ENCODE measurements at regions of chr1 and their contacts with region 1.

Region 1: DNA sequence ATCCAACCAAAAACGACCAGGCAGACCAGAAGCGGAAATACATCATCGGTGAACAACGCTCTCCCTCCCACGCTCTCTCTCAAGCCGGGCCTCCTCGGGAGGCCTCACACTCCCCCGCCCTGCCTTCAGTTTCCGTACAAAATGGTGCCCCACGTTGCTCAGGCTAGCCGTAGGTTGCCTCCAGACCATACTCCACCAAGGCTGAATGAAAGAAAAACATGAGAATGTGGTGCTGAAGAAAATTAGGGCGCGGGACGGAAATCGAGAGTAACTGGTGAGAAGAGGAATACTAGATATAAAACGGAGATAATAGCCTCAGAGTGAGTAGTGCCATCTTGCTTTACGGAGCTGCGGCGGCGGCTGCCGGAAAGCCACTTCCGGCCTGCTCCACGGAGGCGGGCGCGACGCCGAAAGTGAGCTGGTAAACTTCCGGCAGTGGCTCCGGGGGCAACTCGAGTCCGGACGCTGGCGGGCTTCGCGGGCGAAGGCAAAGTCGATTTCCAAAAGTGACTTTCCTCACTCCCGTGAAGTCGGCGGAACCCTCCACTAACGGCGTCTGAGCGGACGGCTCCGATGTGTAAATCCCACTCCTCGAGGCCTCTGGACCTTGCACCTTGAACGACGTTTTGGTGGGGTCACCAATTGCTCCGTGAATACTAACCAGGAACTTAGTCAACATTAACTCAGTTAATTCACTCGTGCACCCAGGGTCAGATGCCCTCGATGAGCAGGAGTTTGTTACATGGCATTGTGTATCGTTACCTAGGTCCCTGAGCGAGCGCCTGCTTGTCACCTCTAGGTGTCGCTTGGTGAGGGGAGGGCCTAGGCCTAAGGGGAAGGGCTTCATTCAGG is at the start of gene SH3BP5L:
- DNase-seq: peak; percentile 77 to 97 (median 90)
- ATAC-seq: peak; percentile 85
- H3K4me3 ChIP-seq: peak within 1 kb of the TSS; percentile 72 to 88
- H3K4me3 Mint-ChIP-seq: peak within 1 kb of the TSS; percentile 95
- H3K27ac ChIP-seq: peak within 1 kb of the TSS; percentile 92 to 99
- H3K27ac Mint-ChIP-seq: peak within 1 kb of the TSS; percentile 97
- H3K4me1 ChIP-seq: peaks cover 45% of the 10 kb centered on the region
- H3K4me1 Mint-ChIP-seq: peaks cover 57% of the 10 kb centered on the region
- H3K27me3 ChIP-seq: no peaks in the 10 kb centered on the region
- H3K27me3 Mint-ChIP-seq: no peaks in the 10 kb centered on the region
- CTCF ChIP-seq: peak; percentile 67
- total RNA-seq, gene SH3BP5L: 19.0 to 20.4 TPM

Region 2: DNA sequence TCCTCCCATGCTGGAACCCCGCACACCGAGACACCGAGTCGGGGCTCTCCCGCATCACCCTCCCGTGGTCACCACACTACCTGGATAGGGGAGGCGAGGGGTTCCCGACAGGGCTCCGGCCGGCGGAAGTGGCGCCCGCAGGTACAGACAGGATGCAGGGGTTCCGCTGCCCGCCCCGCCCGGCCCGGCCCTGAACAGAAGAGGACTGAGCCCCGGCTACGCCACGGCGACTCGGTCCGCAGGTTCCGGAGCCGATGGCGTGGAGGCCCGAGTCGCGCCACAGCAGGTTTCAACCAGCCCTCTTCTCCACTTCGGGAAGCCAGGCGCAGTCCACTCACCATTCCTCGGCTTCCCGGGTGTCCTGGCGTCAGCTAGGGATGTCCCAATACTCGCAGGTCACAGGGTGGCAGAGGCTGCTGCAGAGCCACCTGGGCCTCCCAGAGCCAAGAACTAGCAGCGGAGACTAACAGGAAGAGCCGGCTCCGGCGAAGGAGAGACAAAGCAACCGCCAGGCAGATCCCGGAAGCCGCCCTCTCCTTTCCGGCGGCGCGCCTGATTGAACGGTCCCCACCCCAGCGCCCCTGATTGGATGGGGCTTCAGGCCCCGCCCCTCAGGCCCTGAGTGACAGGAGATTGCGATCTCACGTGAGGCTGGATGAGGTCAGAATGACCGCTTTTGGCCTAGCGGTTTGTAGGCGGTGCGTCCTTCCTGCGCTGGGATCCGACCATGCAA is 1722.1 kb before region 1 on chr1 and contains the start of gene ZNF669:
- CTCF ChIA-PET with region 1: no interaction called
- POLR2A ChIA-PET with region 1: no interaction called
- intact Hi-C with region 1: loop called in 1 of 2 experiments (anchors 5 kb)
- DNase-seq: peak; percentile 83 to 94 (median 91)
- ATAC-seq: peak; percentile 98
- H3K4me3 ChIP-seq: peak within 1 kb of the TSS; percentile 74 to 96
- H3K4me3 Mint-ChIP-seq: peak within 1 kb of the TSS; percentile 89
- H3K27ac ChIP-seq: peak within 1 kb of the TSS; percentile 62 to 85
- H3K27ac Mint-ChIP-seq: peak within 1 kb of the TSS; percentile 85
- H3K4me1 ChIP-seq: peaks cover 9% of the 10 kb centered on the region
- H3K4me1 Mint-ChIP-seq: peaks cover 21% of the 10 kb centered on the region
- H3K27me3 ChIP-seq: no peaks in the 10 kb centered on the region
- H3K27me3 Mint-ChIP-seq: peaks cover 20% of the 10 kb centered on the region
- CTCF ChIP-seq: no peak
- total RNA-seq, gene ZNF669: 15.5 to 23.2 TPM

Region 3: GRCh38 chr1:248759644-248760043 is 66.5 kb before region 1 on chr1:
- CTCF ChIA-PET with region 1: no interaction called
- POLR2A ChIA-PET with region 1: no interaction called
- intact Hi-C with region 1: no loop called
- DNase-seq: no peak
- ATAC-seq: no peak
- H3K4me3 ChIP-seq: no peak overlapping the region
- H3K4me3 Mint-ChIP-seq: no peak overlapping the region
- H3K27ac ChIP-seq: no peak overlapping the region
- H3K27ac Mint-ChIP-seq: no peak overlapping the region
- H3K4me1 ChIP-seq: no peaks in the 10 kb centered on the region
- H3K4me1 Mint-ChIP-seq: no peaks in the 10 kb centered on the region
- H3K27me3 ChIP-seq: no peaks in the 10 kb centered on the region
- H3K27me3 Mint-ChIP-seq: peaks cover 17% of the 10 kb centered on the region
- CTCF ChIP-seq: no peak

Region 4: GRCh38 chr1:248837794-248838356 is 11.7 kb after region 1 on chr1 and contains the start of gene ZNF672:
- CTCF ChIA-PET with region 1: interaction called, 26 read pairs
- POLR2A ChIA-PET with region 1: interaction called, 62 read pairs
- intact Hi-C with region 1: loop called (anchors 1 kb)
- DNase-seq: peak; percentile 84 to 96 (median 94)
- ATAC-seq: peak; percentile 87
- H3K4me3 ChIP-seq: peak within 1 kb of the TSS; percentile 61 to 80
- H3K4me3 Mint-ChIP-seq: no peak within 1 kb of the TSS
- H3K27ac ChIP-seq: peak within 1 kb of the TSS; percentile 99
- H3K27ac Mint-ChIP-seq: peak within 1 kb of the TSS; percentile 99
- H3K4me1 ChIP-seq: peaks cover 24% of the 10 kb centered on the region
- H3K4me1 Mint-ChIP-seq: peaks cover 33% of the 10 kb centered on the region
- H3K27me3 ChIP-seq: peaks cover 0 to 4% of the 10 kb centered on the region in 2 experiments
- H3K27me3 Mint-ChIP-seq: peaks cover 2% of the 10 kb centered on the region
- CTCF ChIP-seq: no peak
- total RNA-seq, gene ZNF672: 33.8 to 33.9 TPM

Region 5: DNA sequence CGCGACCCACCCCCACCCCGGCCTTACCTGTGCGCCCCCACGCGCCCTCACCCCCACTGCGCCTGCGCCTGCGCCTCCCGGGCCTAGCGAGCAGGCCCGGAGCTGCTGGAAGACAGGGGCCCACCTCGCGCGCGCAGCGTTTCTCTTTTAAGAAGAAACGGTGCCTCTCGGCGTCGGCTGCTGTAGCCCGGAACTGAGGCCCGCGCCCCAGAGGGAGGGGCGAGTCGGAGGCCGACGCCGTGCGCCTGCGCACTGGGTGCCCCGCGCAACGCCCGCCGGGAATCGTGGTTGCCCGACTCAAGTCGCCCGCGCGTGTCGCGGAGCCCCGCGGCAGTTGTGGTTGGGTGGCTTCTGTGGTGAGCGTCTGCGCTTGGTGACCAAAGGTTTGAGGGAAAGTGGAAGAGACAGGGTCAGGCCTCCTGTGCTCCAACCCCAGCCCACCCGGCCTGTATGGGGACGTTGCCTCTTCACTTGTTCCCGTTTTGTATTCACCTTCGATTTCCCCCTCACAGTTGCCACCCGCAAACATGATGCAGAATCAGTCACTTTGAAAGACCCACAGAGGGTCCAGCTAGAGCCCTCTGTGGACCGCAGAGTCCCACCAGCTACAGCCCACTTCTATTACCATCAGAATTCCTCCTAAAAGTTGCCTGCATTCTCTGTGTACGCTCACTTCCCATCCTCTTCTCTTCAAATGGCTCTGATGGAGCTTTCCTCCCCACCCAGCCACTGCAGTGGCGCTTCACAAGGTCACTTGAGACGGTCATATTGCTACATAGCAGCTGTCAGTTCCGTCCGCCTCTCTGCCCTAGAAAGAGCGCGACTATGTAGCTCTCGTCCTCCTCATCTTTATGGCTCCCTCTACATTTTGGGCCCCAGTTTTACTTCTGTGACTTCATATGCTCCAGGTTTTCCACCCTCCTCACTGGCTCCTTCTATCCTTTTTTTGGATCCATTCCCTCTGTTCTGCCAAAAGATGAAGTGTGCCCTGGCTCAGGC is 33.1 kb after region 1 on chr1 and contains the start of gene ZNF692:
- CTCF ChIA-PET with region 1: interaction called, 7 read pairs
- POLR2A ChIA-PET with region 1: interaction called, 16 read pairs
- intact Hi-C with region 1: loop called (anchors 1 kb)
- DNase-seq: peak; percentile 92 to 98 (median 96)
- ATAC-seq: peak; percentile 83
- H3K4me3 ChIP-seq: peak within 1 kb of the TSS; percentile 60 to 72
- H3K4me3 Mint-ChIP-seq: peak within 1 kb of the TSS; percentile 82
- H3K27ac ChIP-seq: peak within 1 kb of the TSS; percentile 75 to 82
- H3K27ac Mint-ChIP-seq: peak within 1 kb of the TSS; percentile 97
- H3K4me1 ChIP-seq: peaks cover 50% of the 10 kb centered on the region
- H3K4me1 Mint-ChIP-seq: peaks cover 54% of the 10 kb centered on the region
- H3K27me3 ChIP-seq: no peaks in the 10 kb centered on the region
- H3K27me3 Mint-ChIP-seq: no peaks in the 10 kb centered on the region
- CTCF ChIP-seq: no peak
- total RNA-seq, gene ZNF692: 18.7 to 19.2 TPM

Region 6: DNA sequence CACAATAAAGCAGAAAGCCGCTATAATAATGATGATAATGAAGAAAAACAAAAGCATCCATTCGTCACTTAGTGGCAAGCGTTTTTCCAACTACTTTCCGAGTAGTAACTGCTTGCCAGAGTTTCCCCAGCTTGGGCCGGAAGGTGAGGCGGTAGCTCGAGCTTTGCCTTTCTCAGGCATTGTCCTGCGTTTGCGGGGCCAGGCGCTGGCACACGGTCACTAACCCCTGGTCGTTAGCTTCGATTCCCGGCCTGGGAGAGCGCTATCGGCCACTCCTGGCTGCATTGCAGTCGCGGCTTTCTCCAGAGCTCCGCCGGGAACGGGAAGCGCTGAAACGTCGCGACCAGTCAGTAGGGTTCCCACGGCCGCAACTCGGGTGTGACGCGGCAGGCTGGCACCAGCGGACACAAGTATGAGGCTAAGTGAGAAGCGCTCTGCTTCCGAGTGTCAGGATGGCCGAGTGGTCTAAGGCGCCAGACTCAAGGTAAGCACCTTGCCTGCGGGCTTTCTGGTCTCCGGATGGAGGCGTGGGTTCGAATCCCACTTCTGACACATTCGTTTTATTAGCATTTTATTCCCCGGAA is 47.4 kb after region 1 on chr1:
- CTCF ChIA-PET with region 1: no interaction called
- POLR2A ChIA-PET with region 1: interaction called, 10 read pairs
- intact Hi-C with region 1: loop called (anchors 1 kb)
- DNase-seq: peak; percentile 88 to 95 (median 92)
- ATAC-seq: peak; percentile 77
- H3K4me3 ChIP-seq: peak overlapping the region; percentile 78 to 87
- H3K4me3 Mint-ChIP-seq: peak overlapping the region; percentile 98
- H3K27ac ChIP-seq: peak overlapping the region; percentile 74 to 85
- H3K27ac Mint-ChIP-seq: peak overlapping the region; percentile 98
- H3K4me1 ChIP-seq: peaks cover 8% of the 10 kb centered on the region
- H3K4me1 Mint-ChIP-seq: peaks cover 24% of the 10 kb centered on the region
- H3K27me3 ChIP-seq: no peaks in the 10 kb centered on the region
- H3K27me3 Mint-ChIP-seq: no peaks in the 10 kb centered on the region
- CTCF ChIP-seq: no peak

Region 7: GRCh38 chr1:248906009-248906752 is 80.0 kb after region 1 on chr1 and contains the start of gene PGBD2:
- CTCF ChIA-PET with region 1: interaction called, 3 read pairs
- POLR2A ChIA-PET with region 1: interaction called, 3 read pairs
- intact Hi-C with region 1: loop called (anchors 1 kb)
- DNase-seq: peak; percentile 90 to 99 (median 95)
- ATAC-seq: peak; percentile 86
- H3K4me3 ChIP-seq: peak within 1 kb of the TSS; percentile 72 to 96
- H3K4me3 Mint-ChIP-seq: peak within 1 kb of the TSS; percentile 98
- H3K27ac ChIP-seq: peak within 1 kb of the TSS; percentile 85 to 95
- H3K27ac Mint-ChIP-seq: peak within 1 kb of the TSS; percentile 99
- H3K4me1 ChIP-seq: peaks cover 18% of the 10 kb centered on the region
- H3K4me1 Mint-ChIP-seq: peaks cover 41% of the 10 kb centered on the region
- H3K27me3 ChIP-seq: no peaks in the 10 kb centered on the region
- H3K27me3 Mint-ChIP-seq: no peaks in the 10 kb centered on the region
- CTCF ChIP-seq: peak; percentile 59
- total RNA-seq, gene PGBD2: 0.90 to 1.9 TPM

Measured in CD8-positive, alpha-beta T cell (primary cell).